Mammary epithelial cell (primary cell): ENCODE measurements at regions of chr5 and their contacts with region 1.

Region 1: GRCh38 chr5:38809388-38810359 is 36.1 kb upstream of the OSMR start:
- DNase-seq: peak; percentile 62
- H3K4me3 ChIP-seq: no peak overlapping the region
- H3K27ac ChIP-seq: no peak overlapping the region
- H3K4me1 ChIP-seq: peaks cover 5% of the 10 kb centered on the region
- H3K27me3 ChIP-seq: no peaks in the 10 kb centered on the region
- CTCF ChIP-seq: peak; percentile 86 to 88

Region 2: DNA sequence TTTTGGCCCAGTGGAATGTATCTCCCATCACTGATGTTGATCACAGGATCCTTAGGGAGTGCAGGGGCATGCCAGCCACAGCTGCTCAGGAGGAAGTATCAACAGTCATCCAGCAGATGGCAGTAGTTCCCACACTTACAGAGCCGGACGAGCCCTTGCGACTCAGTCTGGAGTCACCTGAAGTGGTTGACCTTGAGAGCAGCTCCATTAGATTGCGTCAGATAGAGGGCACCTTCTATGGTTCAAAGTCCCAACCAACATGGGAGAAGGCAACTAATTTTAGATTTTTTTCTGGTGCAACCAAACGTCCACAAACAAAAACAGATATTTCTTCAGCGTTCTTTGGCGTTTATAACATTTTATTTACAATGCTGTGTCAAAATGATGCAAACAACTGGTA is 426.8 kb before region 1 on chr5:
- CTCF ChIA-PET with region 1: interaction called, 6 read pairs
- dilution Hi-C with region 1: no loop called
- in situ Hi-C with region 1: no loop called
- intact Hi-C with region 1: loop called (anchors 2 kb)
- DNase-seq: peak; percentile 50
- H3K4me3 ChIP-seq: no peak overlapping the region
- H3K27ac ChIP-seq: no peak overlapping the region
- H3K4me1 ChIP-seq: no peaks in the 10 kb centered on the region
- H3K27me3 ChIP-seq: peaks cover 3% of the 10 kb centered on the region
- CTCF ChIP-seq: peak; percentile 86 to 92

Region 3: DNA sequence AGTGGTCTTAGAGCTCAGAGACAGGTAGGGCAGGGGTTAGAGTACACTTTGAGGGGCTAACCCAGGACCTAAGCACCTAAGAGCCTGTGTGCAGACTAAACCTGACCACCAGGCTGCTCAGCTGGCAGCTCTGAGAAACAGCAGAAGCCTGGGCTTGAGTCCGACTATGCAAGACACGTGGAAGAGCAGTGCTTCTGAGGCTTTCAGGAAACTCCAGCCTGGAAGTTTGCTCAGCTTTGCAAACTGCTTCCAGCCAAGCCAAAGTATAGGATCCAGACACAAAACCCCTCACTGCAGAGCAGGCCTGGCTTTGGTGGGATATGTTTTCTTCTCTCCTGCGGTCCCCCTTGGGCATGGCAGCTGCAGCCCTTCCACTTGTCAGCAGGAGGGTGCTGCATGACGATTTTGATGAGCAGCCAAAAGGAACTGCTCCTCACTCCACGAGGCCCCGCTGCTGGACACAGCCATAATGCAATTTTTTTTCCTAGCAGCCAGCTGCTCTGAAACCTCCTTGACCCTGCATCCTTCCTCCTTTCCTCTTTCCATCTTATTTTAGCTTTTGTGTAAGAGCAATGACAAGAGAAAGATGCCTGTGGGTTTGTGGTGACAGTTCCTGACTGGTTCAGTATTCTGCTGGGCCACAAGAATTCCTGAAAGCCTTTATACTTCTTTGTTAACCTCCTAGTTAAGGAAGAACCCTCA is 376.4 kb before region 1 on chr5:
- CTCF ChIA-PET with region 1: no interaction called
- dilution Hi-C with region 1: no loop called
- in situ Hi-C with region 1: loop called (anchors 5 to 10 kb)
- intact Hi-C with region 1: no loop called
- DNase-seq: no peak
- H3K4me3 ChIP-seq: no peak overlapping the region
- H3K27ac ChIP-seq: no peak overlapping the region
- H3K4me1 ChIP-seq: peaks cover 4% of the 10 kb centered on the region
- H3K27me3 ChIP-seq: no peaks in the 10 kb centered on the region
- CTCF ChIP-seq: no peak

Region 4: GRCh38 chr5:38551030-38552017 is 258.4 kb before region 1 on chr5:
- CTCF ChIA-PET with region 1: no interaction called
- dilution Hi-C with region 1: no loop called
- in situ Hi-C with region 1: loop called in 1 of 2 experiments (anchors 25 kb)
- intact Hi-C with region 1: loop called (anchors 1 kb)
- DNase-seq: peak; percentile 23
- H3K4me3 ChIP-seq: no peak overlapping the region
- H3K27ac ChIP-seq: no peak overlapping the region
- H3K4me1 ChIP-seq: peaks cover 15% of the 10 kb centered on the region
- H3K27me3 ChIP-seq: no peaks in the 10 kb centered on the region
- CTCF ChIP-seq: peak; percentile 77 to 92

Region 5: GRCh38 chr5:38672059-38672788 is 137.4 kb before region 1 on chr5:
- CTCF ChIA-PET with region 1: interaction called, 6 read pairs
- dilution Hi-C with region 1: no loop called
- in situ Hi-C with region 1: no loop called
- intact Hi-C with region 1: loop called (anchors 5 kb)
- DNase-seq: no peak
- H3K4me3 ChIP-seq: no peak overlapping the region
- H3K27ac ChIP-seq: no peak overlapping the region
- H3K4me1 ChIP-seq: no peaks in the 10 kb centered on the region
- H3K27me3 ChIP-seq: no peaks in the 10 kb centered on the region
- CTCF ChIP-seq: no peak

Region 6: GRCh38 chr5:38783011-38783561 is 26.6 kb before region 1 on chr5:
- CTCF ChIA-PET with region 1: no interaction called
- dilution Hi-C with region 1: no loop called
- in situ Hi-C with region 1: no loop called
- intact Hi-C with region 1: no loop called
- DNase-seq: peak; percentile 42
- H3K4me3 ChIP-seq: no peak overlapping the region
- H3K27ac ChIP-seq: no peak overlapping the region
- H3K4me1 ChIP-seq: peaks cover 10% of the 10 kb centered on the region
- H3K27me3 ChIP-seq: no peaks in the 10 kb centered on the region
- CTCF ChIP-seq: no peak

Region 7: GRCh38 chr5:38795986-38796741 is 13.5 kb before region 1 on chr5:
- CTCF ChIA-PET with region 1: no interaction called
- dilution Hi-C with region 1: no loop called
- in situ Hi-C with region 1: no loop called
- intact Hi-C with region 1: no loop called
- DNase-seq: no peak
- H3K4me3 ChIP-seq: no peak overlapping the region
- H3K27ac ChIP-seq: no peak overlapping the region
- H3K4me1 ChIP-seq: no peaks in the 10 kb centered on the region
- H3K27me3 ChIP-seq: no peaks in the 10 kb centered on the region
- CTCF ChIP-seq: no peak

Region 8: DNA sequence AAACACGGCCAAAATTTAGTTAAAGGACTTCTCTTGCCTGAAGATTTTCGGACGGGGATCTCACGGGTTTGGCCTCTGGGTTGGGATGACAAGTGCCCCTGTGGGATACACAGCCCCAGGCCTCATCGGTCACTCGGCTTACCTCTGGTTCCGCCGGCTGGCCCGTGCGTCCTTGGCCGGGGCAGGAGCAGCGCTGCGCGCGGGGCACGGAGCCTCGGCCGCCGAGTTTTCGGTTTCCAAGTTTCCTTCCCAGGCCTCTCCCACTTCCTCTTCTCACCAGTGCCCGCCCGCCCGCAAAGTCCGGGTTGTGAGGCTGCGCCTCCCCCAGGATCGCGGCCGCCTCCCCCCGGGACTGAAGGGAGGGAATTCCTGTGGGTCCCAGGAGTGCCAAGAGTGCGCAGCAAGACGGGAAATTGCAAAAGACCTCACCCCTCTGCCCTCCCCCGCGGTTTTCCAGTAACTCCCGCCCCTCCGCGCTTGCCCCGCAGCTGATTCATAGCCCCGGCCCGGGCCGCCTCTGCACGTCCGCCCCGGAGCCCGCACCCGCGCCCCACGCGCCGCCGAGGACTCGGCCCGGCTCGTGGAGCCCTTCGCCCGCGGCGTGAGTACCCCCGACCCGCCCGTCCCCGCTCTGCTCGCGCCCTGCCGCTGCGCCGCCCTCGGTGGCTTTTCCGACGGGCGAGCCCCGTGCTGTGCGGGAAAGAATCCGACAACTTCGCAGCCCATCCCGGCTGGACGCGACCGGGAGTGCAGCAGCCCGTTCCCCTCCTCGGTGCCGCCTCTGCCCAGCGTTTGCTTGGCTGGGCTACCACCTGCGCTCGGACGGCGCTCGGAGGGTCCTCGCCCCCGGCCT is 36.1 kb after region 1 on chr5 and contains the start of gene OSMR:
- CTCF ChIA-PET with region 1: interaction called, 14 read pairs
- dilution Hi-C with region 1: no loop called
- in situ Hi-C with region 1: no loop called
- intact Hi-C with region 1: no loop called
- DNase-seq: peak; percentile 98
- H3K4me3 ChIP-seq: peak within 1 kb of the TSS; percentile 96 to 98 (median 97)
- H3K27ac ChIP-seq: peak within 1 kb of the TSS; percentile 100
- H3K4me1 ChIP-seq: peaks cover 17% of the 10 kb centered on the region
- H3K27me3 ChIP-seq: no peaks in the 10 kb centered on the region
- CTCF ChIP-seq: no peak
- total RNA-seq, gene OSMR: 97.7 to 111 TPM